ENCODE measurements at regions of chr17 and their contacts with region 1.

Region 1: DNA sequence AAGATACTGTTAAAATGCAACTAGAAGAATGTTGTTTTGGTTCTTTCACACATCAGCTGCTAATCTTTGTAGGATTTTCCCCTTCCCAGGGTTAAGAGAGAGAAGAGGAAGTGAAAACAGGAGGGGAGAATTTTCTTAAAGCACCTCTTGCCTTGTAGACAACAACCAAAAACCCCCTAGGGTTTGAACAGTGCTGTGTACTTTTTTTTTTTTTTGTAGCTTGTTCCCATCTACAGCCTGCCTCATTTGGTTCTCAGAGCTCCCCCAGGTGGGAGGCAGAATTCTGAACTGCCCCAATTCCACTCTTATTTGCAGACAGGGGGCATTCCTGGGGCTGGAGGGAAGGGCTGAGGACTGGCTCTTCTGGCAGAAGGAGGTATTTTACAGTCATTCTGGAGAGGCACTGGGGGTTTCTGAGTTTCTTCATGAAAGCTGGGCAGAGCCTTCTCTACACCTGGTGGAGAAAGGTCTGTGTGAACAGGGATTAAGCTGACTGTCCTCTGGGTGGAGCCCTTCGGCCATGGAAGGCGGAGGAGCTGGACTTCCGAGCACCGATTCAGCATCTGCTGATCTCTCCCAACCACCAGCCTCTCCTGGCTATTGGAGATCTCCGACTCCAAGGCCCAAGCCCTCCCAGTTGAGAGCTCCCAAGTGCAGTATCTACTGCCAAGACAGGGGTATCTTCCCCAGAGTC is 32.2 kb downstream of the SMARCE1 start:
- DNase-seq: peak; percentile 84
- H3K4me3 Mint-ChIP-seq: peak overlapping the region; percentile 13
- H3K27ac Mint-ChIP-seq: peak overlapping the region; percentile 89
- H3K4me1 Mint-ChIP-seq: peaks cover 76% of the 10 kb centered on the region
- H3K27me3 Mint-ChIP-seq: no peaks in the 10 kb centered on the region

Region 2: DNA sequence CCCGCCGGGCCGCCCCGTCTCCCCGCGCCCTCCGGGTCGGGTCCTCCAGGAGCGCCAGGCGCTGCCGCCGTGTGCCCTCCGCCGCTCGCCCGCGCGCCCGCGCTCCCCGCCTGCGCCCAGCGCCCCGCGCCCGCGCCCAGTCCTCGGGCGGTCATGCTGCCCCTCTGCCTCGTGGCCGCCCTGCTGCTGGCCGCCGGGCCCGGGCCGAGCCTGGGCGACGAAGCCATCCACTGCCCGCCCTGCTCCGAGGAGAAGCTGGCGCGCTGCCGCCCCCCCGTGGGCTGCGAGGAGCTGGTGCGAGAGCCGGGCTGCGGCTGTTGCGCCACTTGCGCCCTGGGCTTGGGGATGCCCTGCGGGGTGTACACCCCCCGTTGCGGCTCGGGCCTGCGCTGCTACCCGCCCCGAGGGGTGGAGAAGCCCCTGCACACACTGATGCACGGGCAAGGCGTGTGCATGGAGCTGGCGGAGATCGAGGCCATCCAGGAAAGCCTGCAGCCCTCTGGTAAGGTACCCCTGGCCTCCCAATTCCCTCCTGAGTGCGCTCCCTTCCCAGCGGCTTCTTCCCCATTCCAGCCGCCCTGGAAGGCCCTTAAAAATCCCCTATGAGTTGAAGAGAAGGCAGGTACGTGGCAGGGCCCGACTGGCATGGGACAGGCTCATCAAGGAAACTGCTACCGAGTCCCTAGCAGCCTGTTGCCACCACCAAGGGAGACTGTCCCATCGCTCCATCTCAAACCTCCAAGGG is 171.7 kb before region 1 on chr17:
- CTCF ChIA-PET with region 1: interaction called, 3 read pairs
- intact Hi-C with region 1: loop called (anchors 2 kb)
- DNase-seq: peak; percentile 74
- H3K4me3 Mint-ChIP-seq: peak overlapping the region; percentile 78
- H3K27ac Mint-ChIP-seq: peak overlapping the region; percentile 76
- H3K4me1 Mint-ChIP-seq: peaks cover 29% of the 10 kb centered on the region
- H3K27me3 Mint-ChIP-seq: peaks cover 4% of the 10 kb centered on the region

Region 3: GRCh38 chr17:40536295-40537171 is 78.9 kb before region 1 on chr17:
- CTCF ChIA-PET with region 1: interaction called, 18 read pairs
- intact Hi-C with region 1: loop called (anchors 1 kb)
- DNase-seq: no peak
- H3K4me3 Mint-ChIP-seq: no peak overlapping the region
- H3K27ac Mint-ChIP-seq: peak overlapping the region; percentile 42
- H3K4me1 Mint-ChIP-seq: peaks cover 90% of the 10 kb centered on the region
- H3K27me3 Mint-ChIP-seq: no peaks in the 10 kb centered on the region

Region 4: GRCh38 chr17:40559954-40560591 is 55.4 kb before region 1 on chr17:
- CTCF ChIA-PET with region 1: interaction called, 205 read pairs
- intact Hi-C with region 1: loop called (anchors 1 kb)
- DNase-seq: peak; percentile 93
- H3K4me3 Mint-ChIP-seq: peak overlapping the region; percentile 96
- H3K27ac Mint-ChIP-seq: peak overlapping the region; percentile 100
- H3K4me1 Mint-ChIP-seq: peaks cover 66% of the 10 kb centered on the region
- H3K27me3 Mint-ChIP-seq: no peaks in the 10 kb centered on the region

Region 5: GRCh38 chr17:40726919-40727318 is 111.5 kb after region 1 on chr17:
- CTCF ChIA-PET with region 1: interaction called, 4 read pairs
- intact Hi-C with region 1: loop called (anchors 1 kb)
- DNase-seq: no peak
- H3K4me3 Mint-ChIP-seq: no peak overlapping the region
- H3K27ac Mint-ChIP-seq: no peak overlapping the region
- H3K4me1 Mint-ChIP-seq: peaks cover 2% of the 10 kb centered on the region
- H3K27me3 Mint-ChIP-seq: peaks cover 8% of the 10 kb centered on the region

Region 6: DNA sequence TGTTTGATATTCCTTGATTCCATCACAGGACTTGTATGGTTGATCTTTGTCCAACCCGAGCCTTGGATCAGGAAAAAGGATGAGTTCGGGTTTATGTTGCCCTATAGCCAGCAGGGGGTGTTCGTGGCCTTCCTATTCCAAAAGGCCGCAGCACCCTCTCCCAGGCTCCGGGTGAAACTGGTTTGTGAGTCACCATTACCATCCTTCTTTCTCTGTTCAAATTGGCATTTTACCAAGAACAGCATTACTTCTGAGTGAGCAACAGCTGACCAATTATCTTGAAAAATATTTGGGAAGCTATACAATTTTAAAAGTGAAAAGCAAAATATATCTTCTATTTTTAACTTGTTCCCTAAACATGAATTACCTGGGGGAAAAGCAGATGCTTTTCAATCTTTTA is 293.9 kb after region 1 on chr17:
- CTCF ChIA-PET with region 1: no interaction called
- intact Hi-C with region 1: loop called (anchors 1 kb)
- DNase-seq: peak; percentile 74
- H3K4me3 Mint-ChIP-seq: no peak overlapping the region
- H3K27ac Mint-ChIP-seq: no peak overlapping the region
- H3K4me1 Mint-ChIP-seq: no peaks in the 10 kb centered on the region
- H3K27me3 Mint-ChIP-seq: peaks cover 20% of the 10 kb centered on the region

Measured in activated naive CD4-positive, alpha-beta T cell treated with anti-CD3 and anti-CD28 coated beads for 36 hours (primary cell).